Mammary epithelial cell (primary cell): ENCODE measurements at regions of chr12 and their contacts with region 1.

Region 1: GRCh38 chr12:2284857-2285256 is 232.1 kb downstream of the CACNA1C start:
- DNase-seq: peak; percentile 58
- H3K4me3 ChIP-seq: no peak overlapping the region
- H3K27ac ChIP-seq: no peak overlapping the region
- H3K4me1 ChIP-seq: peaks cover 9% of the 10 kb centered on the region
- H3K27me3 ChIP-seq: peaks cover 2% of the 10 kb centered on the region
- CTCF ChIP-seq: peak; percentile 75 to 81

Region 2: DNA sequence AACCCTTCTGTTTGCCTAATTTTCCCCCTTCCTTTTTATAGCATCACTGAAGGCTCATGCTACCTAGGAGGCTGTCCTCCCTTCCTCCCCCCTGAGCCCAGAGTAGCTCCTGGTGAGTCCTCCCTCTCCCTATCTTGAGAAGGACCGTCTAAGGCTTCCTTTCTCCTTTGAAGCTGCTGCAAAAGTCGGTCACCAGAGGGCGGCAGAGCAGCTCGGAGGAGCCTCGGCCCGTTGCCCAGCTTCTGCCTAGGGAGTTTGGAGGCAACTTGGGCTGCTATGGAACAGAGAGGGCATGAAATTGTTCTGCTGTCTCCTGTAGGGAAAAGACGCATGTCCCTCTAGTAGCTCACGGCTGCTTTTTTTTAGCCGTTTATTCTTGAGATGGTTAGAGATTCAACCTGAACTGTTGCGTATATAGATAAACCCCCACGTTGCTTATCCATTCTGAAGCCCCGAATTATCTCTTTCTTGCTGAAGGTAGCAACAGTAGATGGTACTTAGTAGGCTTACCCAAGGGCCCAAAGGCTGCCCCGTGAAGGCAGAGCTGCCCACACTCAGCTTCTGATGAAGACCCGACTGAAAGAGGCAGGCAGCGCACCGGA is 650.2 kb before region 1 on chr12:
- CTCF ChIA-PET with region 1: no interaction called
- dilution Hi-C with region 1: no loop called
- in situ Hi-C with region 1: no loop called
- intact Hi-C with region 1: loop called (anchors 10 kb)
- DNase-seq: peak; percentile 43
- H3K4me3 ChIP-seq: no peak overlapping the region
- H3K27ac ChIP-seq: no peak overlapping the region
- H3K4me1 ChIP-seq: peaks cover 9% of the 10 kb centered on the region
- H3K27me3 ChIP-seq: peaks cover 2% of the 10 kb centered on the region
- CTCF ChIP-seq: peak; percentile 95 to 97

Region 3: GRCh38 chr12:1719139-1719538 is 565.7 kb before region 1 on chr12:
- CTCF ChIA-PET with region 1: no interaction called
- dilution Hi-C with region 1: no loop called
- in situ Hi-C with region 1: no loop called
- intact Hi-C with region 1: no loop called
- DNase-seq: no peak
- H3K4me3 ChIP-seq: no peak overlapping the region
- H3K27ac ChIP-seq: no peak overlapping the region
- H3K4me1 ChIP-seq: no peaks in the 10 kb centered on the region
- H3K27me3 ChIP-seq: no peaks in the 10 kb centered on the region
- CTCF ChIP-seq: no peak

Region 4: DNA sequence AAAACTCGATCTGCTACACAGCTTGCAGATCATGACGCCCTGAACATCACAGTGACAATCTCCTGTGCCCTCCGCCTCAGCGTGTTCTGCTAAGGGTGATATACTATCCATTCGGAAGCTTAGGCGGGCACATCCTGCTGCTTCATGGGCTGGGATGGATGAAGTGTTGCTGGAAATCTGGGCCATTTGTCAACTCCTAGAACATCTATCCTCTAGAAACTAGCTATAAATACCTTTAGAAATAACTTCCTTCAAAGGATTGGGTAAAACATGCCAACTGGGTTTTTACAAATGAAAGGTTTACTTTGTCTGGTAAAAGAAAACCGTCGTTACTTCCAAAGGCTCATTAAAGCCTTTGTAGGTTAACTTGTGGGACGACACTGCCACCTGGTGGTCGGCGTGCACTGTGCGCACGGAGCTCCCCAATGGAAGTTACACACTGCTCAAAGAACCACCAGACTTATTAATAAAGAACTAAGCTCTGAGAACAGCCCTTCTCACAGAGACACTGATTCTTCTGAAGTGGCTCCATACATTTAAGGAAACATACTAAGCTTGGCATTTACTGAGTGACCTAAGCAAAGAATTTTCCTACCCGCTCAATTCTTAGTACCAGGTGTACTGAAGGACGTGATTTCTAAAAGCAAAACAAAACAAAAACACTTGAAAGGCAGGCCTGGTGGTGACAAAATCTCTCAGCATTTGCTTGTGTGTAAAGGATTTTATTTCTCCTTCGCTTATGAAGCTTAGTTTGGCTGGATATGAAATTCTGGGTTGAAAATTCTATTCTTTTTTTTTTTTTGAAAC is 344.9 kb before region 1 on chr12:
- CTCF ChIA-PET with region 1: no interaction called
- dilution Hi-C with region 1: no loop called
- in situ Hi-C with region 1: no loop called
- intact Hi-C with region 1: loop called (anchors 5 kb)
- DNase-seq: peak; percentile 57
- H3K4me3 ChIP-seq: no peak overlapping the region
- H3K27ac ChIP-seq: no peak overlapping the region
- H3K4me1 ChIP-seq: no peaks in the 10 kb centered on the region
- H3K27me3 ChIP-seq: no peaks in the 10 kb centered on the region
- CTCF ChIP-seq: peak; percentile 90 to 95

Region 5: GRCh38 chr12:2057041-2057794 is 227.6 kb before region 1 on chr12:
- CTCF ChIA-PET with region 1: interaction called, 9 read pairs
- dilution Hi-C with region 1: no loop called
- in situ Hi-C with region 1: loop called (anchors 5 kb)
- intact Hi-C with region 1: loop called (anchors 1 kb)
- DNase-seq: peak; percentile 14
- H3K4me3 ChIP-seq: no peak overlapping the region
- H3K27ac ChIP-seq: no peak overlapping the region
- H3K4me1 ChIP-seq: no peaks in the 10 kb centered on the region
- H3K27me3 ChIP-seq: peaks cover 31% of the 10 kb centered on the region
- CTCF ChIP-seq: peak; percentile 81 to 86

Region 6: DNA sequence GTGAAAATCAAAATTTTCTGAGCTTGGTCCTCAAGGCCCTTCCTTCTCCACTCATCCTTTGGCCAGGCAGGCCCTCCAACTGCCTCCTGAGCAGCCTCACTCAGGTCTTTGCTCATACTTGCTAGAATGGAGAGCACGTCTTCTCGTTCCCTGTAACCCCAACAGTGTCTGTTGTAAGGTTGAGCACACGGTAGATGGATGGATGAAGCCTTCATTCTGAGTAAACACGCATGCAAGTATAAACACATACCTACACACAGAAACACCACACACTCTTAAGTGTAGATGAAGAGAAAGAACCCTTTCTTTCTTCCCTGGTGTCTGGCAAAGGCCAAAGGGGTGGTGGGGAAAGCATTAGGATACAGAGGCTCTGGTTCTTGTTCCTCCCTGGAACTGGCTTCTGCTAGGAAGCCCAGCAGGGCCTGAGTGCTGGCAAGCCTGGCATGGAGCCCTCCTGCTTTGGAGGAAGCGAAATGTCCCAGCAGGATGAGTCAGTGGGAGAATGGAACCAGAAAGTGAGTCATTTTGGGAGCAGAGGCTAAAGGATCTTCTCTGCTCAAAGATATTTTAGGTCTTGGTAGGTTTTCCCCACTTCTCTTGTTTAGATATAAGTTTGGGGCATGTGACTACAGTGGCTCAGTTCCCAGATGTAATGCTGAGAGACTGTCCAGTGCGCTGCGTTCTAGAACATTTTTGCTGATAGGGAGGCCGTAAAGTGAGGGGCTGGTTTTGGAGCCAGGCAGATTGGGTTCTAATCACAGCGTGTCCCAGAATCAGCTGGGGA is 104.7 kb before region 1 on chr12:
- CTCF ChIA-PET with region 1: no interaction called
- dilution Hi-C with region 1: no loop called
- in situ Hi-C with region 1: no loop called
- intact Hi-C with region 1: loop called (anchors 2 kb)
- DNase-seq: peak; percentile 80
- H3K4me3 ChIP-seq: no peak overlapping the region
- H3K27ac ChIP-seq: no peak overlapping the region
- H3K4me1 ChIP-seq: peaks cover 12% of the 10 kb centered on the region
- H3K27me3 ChIP-seq: no peaks in the 10 kb centered on the region
- CTCF ChIP-seq: no peak

Region 7: DNA sequence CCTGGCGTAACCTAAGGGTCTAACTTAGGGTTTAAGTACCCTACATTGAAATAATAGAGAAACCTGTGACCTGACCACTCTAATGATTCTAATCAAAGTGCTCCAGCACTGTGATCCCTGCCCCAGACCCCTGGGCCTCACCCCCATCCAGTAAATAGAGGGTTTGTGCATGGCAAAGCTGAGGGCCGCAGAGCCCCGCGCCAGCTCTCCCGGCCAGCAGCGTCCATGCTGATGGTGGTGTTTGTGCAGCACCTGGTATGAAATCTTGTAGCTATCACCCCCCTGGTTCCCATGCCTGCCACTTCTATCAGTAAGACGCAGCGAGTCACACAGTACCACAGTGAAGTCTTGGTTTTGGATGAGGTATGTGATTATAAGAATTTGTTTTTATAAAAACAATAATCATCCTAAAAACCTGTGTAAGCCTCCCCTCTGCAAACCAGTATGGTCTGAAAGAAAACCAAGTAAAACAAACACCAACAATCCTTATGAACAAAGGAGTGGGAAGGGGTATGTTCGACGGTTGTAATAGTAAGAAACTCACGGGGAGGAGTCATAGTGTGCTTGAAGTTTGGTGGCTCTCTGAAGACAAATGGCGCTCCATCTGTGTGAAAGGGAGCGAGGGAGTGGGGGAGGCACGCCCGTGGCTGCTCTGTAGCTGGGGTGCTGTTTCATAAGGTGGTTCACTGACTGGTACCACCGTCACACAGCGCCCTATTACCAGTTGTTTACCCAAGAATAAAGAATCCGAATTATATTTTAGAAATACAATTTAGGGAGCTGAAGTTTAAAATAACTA is 75.8 kb before region 1 on chr12:
- CTCF ChIA-PET with region 1: no interaction called
- dilution Hi-C with region 1: no loop called
- in situ Hi-C with region 1: no loop called
- intact Hi-C with region 1: loop called (anchors 5 kb)
- DNase-seq: no peak
- H3K4me3 ChIP-seq: no peak overlapping the region
- H3K27ac ChIP-seq: no peak overlapping the region
- H3K4me1 ChIP-seq: no peaks in the 10 kb centered on the region
- H3K27me3 ChIP-seq: no peaks in the 10 kb centered on the region
- CTCF ChIP-seq: no peak

Region 8: DNA sequence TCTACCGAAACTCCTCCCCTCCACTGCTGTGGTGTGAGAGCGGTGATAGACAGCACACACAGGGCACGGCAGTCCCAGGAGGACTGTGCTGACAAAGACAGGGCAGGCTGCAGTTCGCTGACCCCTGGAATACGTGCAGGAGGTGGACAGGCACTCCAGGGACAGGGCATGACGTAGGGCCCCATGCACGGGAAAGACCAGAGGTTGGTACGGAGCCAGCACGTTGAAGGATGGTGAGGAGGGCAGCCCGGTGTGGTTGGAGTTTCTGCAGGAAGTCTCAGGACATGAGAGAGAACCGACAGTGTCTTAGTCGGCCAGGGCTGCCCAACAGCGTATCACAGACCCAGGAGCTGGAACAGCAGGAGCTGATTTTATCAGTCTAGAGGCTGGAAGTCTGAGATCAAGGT is 255.7 kb after region 1 on chr12:
- CTCF ChIA-PET with region 1: no interaction called
- dilution Hi-C with region 1: no loop called
- in situ Hi-C with region 1: no loop called
- intact Hi-C with region 1: no loop called
- DNase-seq: no peak
- H3K4me3 ChIP-seq: no peak overlapping the region
- H3K27ac ChIP-seq: no peak overlapping the region
- H3K4me1 ChIP-seq: no peaks in the 10 kb centered on the region
- H3K27me3 ChIP-seq: peaks cover 3% of the 10 kb centered on the region
- CTCF ChIP-seq: no peak